ENCODE measurements at regions of chr4 and their contacts with region 1.

Region 1: DNA sequence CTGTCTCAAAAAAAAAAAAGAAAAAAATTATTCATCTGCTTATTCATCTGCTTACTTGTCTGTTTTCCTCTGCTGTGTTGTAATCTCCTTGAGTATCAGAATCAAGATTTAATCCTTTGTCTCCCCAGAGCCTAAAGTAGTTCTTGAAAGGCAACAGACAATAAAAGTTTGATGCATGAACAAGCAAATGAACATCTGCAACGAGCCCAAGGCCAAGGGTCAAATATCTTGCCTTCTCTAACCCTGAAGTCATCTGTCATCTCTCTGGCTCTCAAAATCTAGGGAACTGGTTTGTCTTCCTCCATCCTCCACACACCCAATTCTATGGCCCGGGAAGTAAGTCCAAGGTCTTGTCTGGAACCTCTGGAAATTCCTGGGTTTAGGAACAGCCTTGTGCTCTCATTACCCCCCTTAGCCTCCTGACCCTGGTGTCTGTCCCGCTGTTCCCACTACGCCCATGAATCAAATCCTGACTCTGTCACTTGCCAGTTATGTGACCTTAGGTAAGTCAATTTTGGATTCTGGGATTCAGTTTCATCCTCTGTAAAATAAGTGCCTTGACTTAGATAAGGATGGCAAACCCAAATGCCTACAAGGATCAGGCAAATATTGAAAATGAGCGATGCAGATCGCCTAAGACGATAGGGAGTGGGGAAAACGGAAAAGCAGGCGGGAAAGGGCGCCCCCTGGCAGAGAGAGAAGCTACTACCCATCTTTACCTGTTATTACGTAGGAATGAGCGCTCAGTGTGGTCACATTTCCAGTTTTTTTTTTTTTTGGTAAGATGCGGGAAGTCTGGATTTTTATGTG is 102.7 kb upstream of the DHX15 start:
- DNase-seq: peak; percentile 58
- ATAC-seq: no peak
- H3K4me3 Mint-ChIP-seq: no peak overlapping the region
- H3K27ac Mint-ChIP-seq: no peak overlapping the region
- H3K4me1 Mint-ChIP-seq: no peaks in the 10 kb centered on the region
- H3K27me3 Mint-ChIP-seq: peaks cover 13% of the 10 kb centered on the region

Region 2: GRCh38 chr4:24488399-24489164 is 198.5 kb before region 1 on chr4:
- CTCF ChIA-PET with region 1: interaction called, 4 read pairs
- POLR2A ChIA-PET with region 1: no interaction called
- intact Hi-C with region 1: loop called (anchors 1 to 5 kb)
- DNase-seq: peak; percentile 86
- ATAC-seq: peak; percentile 80
- H3K4me3 Mint-ChIP-seq: no peak overlapping the region
- H3K27ac Mint-ChIP-seq: no peak overlapping the region
- H3K4me1 Mint-ChIP-seq: no peaks in the 10 kb centered on the region
- H3K27me3 Mint-ChIP-seq: peaks cover 25% of the 10 kb centered on the region

Region 3: GRCh38 chr4:24993551-24994080 is 306.5 kb after region 1 on chr4:
- CTCF ChIA-PET with region 1: no interaction called
- POLR2A ChIA-PET with region 1: no interaction called
- intact Hi-C with region 1: no loop called
- DNase-seq: no peak
- ATAC-seq: no peak
- H3K4me3 Mint-ChIP-seq: no peak overlapping the region
- H3K27ac Mint-ChIP-seq: no peak overlapping the region
- H3K4me1 Mint-ChIP-seq: no peaks in the 10 kb centered on the region
- H3K27me3 Mint-ChIP-seq: peaks cover 3% of the 10 kb centered on the region

Region 4: GRCh38 chr4:25013756-25014661 is 326.9 kb after region 1 on chr4:
- CTCF ChIA-PET with region 1: no interaction called
- POLR2A ChIA-PET with region 1: no interaction called
- intact Hi-C with region 1: no loop called
- DNase-seq: no peak
- ATAC-seq: no peak
- H3K4me3 Mint-ChIP-seq: no peak overlapping the region
- H3K27ac Mint-ChIP-seq: no peak overlapping the region
- H3K4me1 Mint-ChIP-seq: no peaks in the 10 kb centered on the region
- H3K27me3 Mint-ChIP-seq: peaks cover 5% of the 10 kb centered on the region